Activated CD8-positive, alpha-beta memory T cell treated with anti-CD3 and anti-CD28 coated beads, Interleukin-2, amount 10 ng/mL, durations not matched to agents 7 days and 5 days (primary cell): ENCODE measurements at regions of chr1 and their contacts with region 1.

Region 1: GRCh38 chr1:160681067-160681890 is 30.3 kb downstream of the CD48 start:
- DNase-seq: peak; percentile 93
- ATAC-seq: peak; percentile 72
- H3K4me3 Mint-ChIP-seq: no peak overlapping the region
- H3K27ac Mint-ChIP-seq: peak overlapping the region; percentile 92
- H3K4me1 Mint-ChIP-seq: peaks cover 83% of the 10 kb centered on the region
- H3K27me3 Mint-ChIP-seq: no peaks in the 10 kb centered on the region

Region 2: GRCh38 chr1:160664573-160665051 is 16.7 kb before region 1 on chr1:
- CTCF ChIA-PET with region 1: interaction called, 27 read pairs
- DNase-seq: peak; percentile 75
- ATAC-seq: peak; percentile 83
- H3K4me3 Mint-ChIP-seq: peak overlapping the region; percentile 70
- H3K27ac Mint-ChIP-seq: peak overlapping the region; percentile 93
- H3K4me1 Mint-ChIP-seq: peaks cover 71% of the 10 kb centered on the region
- H3K27me3 Mint-ChIP-seq: no peaks in the 10 kb centered on the region

Region 3: GRCh38 chr1:160704250-160704649 is 23.0 kb after region 1 on chr1:
- CTCF ChIA-PET with region 1: interaction called, 61 read pairs
- DNase-seq: no peak
- ATAC-seq: no peak
- H3K4me3 Mint-ChIP-seq: peak overlapping the region; percentile 6
- H3K27ac Mint-ChIP-seq: peak overlapping the region; percentile 29
- H3K4me1 Mint-ChIP-seq: peaks cover 64% of the 10 kb centered on the region
- H3K27me3 Mint-ChIP-seq: no peaks in the 10 kb centered on the region

Region 4: GRCh38 chr1:160711602-160712311 is 30.5 kb after region 1 on chr1 and contains the start of gene CD48:
- CTCF ChIA-PET with region 1: interaction called, 61 read pairs
- DNase-seq: peak; percentile 79
- ATAC-seq: peak; percentile 48
- H3K4me3 Mint-ChIP-seq: no peak within 1 kb of the TSS
- H3K27ac Mint-ChIP-seq: no peak within 1 kb of the TSS
- H3K4me1 Mint-ChIP-seq: peaks cover 27% of the 10 kb centered on the region
- H3K27me3 Mint-ChIP-seq: no peaks in the 10 kb centered on the region
- total RNA-seq, gene CD48: 304 to 332 TPM

Region 5: DNA sequence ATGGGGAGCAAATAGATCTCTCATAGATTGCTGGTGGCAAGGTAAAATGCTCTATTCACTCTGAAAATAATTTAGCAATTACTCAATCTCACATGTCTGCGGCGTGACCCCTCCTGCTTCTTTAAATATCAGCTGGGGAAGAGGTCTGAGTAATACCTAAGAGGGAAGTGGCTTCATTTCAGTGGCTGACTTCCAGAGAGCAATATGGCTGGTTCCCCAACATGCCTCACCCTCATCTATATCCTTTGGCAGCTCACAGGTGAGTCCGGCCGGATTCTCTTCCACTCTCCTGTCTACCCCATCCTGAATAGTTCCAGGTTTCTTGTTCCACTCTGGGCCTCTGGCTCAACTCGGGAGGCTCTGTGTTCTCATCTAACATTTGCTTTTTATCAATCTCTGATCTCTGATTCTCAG is 57.8 kb after region 1 on chr1 and contains the start of gene SLAMF7:
- CTCF ChIA-PET with region 1: interaction called, 11 read pairs
- DNase-seq: peak; percentile 81
- ATAC-seq: peak; percentile 69
- H3K4me3 Mint-ChIP-seq: peak within 1 kb of the TSS; percentile 82
- H3K27ac Mint-ChIP-seq: peak within 1 kb of the TSS; percentile 86
- H3K4me1 Mint-ChIP-seq: peaks cover 67% of the 10 kb centered on the region
- H3K27me3 Mint-ChIP-seq: no peaks in the 10 kb centered on the region
- total RNA-seq, gene SLAMF7: 107 to 126 TPM

Region 6: DNA sequence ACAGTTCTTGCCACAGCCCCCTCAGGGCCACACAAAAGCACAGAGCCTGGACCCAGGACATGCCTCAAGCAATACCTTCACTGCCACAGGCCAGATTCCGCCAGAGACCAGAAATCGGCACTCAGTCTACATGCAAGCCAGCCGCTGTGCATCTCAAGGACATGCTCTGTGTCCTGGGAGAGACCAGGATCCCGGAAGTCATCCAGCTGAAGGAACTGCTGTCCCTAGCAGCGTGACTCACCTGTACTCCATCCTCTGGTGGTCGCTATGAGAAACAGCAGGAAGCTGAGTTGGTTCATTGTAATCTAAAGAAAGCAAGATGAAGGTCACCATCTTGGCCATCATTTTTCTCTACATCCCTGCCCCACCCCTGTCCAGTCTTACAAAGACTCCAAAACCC is 203.3 kb after region 1 on chr1:
- CTCF ChIA-PET with region 1: no interaction called
- DNase-seq: no peak
- ATAC-seq: no peak
- H3K4me3 Mint-ChIP-seq: no peak overlapping the region
- H3K27ac Mint-ChIP-seq: no peak overlapping the region
- H3K4me1 Mint-ChIP-seq: peaks cover 9% of the 10 kb centered on the region
- H3K27me3 Mint-ChIP-seq: no peaks in the 10 kb centered on the region